Posterior cingulate gyrus (tissue), 11 donors: ENCODE measurements at regions of chr19 and their contacts with region 1.

Region 1: GRCh38 chr19:36915992-36916830 is at the starts of genes ZNF568 and ZNF829:
- DNase-seq: peak; percentile 84 to 99 (median 93)

Region 2: DNA sequence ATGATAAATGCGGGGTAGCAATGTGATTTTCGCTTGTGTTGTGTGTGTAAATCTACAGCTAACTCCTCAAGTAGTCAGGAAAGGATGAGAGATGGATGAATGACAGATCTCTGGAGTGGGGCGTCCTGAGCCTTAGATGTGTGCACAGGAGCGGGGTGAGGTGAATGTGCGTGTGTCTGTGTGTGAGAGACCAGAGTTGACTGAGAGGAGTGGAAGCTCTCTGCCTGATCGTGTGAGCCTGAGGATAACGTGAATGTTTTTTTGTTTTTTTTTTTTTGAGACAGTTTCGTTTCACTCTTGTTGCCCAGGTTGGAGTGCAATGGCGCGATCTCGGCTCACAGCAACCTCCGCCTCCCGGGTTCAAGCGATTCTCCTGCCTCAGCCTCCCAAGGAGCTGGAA is 250.4 kb before region 1 on chr19:
- intact Hi-C with region 1: loop called (anchors 10 kb)
- DNase-seq: no peak

Region 3: GRCh38 chr19:36745870-36746269 is 170.3 kb before region 1 on chr19:
- intact Hi-C with region 1: no loop called
- DNase-seq: no peak

Region 4: GRCh38 chr19:36796076-36796992 is 119.9 kb before region 1 on chr19:
- intact Hi-C with region 1: no loop called
- DNase-seq: no peak

Region 5: GRCh38 chr19:36986601-36987000 is 70.4 kb after region 1 on chr19:
- intact Hi-C with region 1: no loop called
- DNase-seq: no peak

Region 6: DNA sequence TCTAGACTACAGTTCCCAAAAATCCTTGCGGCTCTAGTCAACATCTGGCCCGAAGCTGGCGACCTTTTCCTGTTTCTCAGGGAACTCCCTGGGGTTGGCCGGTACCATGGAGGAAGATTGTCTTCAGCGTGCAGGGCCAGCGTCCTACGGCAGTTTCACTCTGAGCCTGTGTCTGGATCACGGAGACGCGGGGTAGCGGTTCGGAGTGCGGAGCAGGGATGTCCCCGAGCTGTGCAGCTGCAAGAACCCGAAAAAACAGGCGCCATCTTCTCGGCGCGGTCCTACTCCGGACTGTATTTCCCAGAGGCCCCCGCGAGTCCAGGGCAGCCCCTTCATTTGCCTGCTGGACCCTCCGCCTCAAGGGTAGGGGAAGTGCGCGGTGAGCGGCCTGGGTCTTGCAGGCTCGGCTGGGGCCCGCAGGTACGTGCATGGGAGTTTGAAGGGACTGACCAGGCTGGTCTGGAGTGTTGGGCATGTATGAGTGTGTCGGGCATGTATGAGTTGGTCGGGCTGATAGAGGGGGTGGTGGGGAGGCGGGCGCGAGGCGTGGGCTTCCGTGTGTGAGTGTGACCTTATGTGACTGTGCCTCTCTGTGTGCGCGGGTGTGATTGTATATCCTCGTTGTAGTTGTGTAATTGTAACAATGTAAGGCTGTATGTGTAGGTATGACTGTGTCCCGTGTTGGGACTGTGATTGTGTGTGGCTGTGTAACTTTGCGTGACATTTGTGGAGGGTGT is 301.8 kb after region 1 on chr19 and contains the start of gene ZNF383:
- intact Hi-C with region 1: loop called (anchors 10 kb)
- DNase-seq: peak; percentile 83 to 98 (median 90)